Activated CD8-positive, alpha-beta T cell treated with anti-CD3 and anti-CD28 coated beads for 36 hours (primary cell): ENCODE measurements at regions of chr16 and their contacts with region 1.

Region 1: GRCh38 chr16:27109666-27110523 is 43.2 kb downstream of the C16orf82 start:
- DNase-seq: peak; percentile 78
- ATAC-seq: peak; percentile 98
- H3K4me3 Mint-ChIP-seq: peak overlapping the region; percentile 53
- H3K27ac Mint-ChIP-seq: no peak overlapping the region
- H3K4me1 Mint-ChIP-seq: peaks cover 2% of the 10 kb centered on the region
- H3K27me3 Mint-ChIP-seq: no peaks in the 10 kb centered on the region
- CTCF ChIP-seq: peak; percentile 99

Region 2: DNA sequence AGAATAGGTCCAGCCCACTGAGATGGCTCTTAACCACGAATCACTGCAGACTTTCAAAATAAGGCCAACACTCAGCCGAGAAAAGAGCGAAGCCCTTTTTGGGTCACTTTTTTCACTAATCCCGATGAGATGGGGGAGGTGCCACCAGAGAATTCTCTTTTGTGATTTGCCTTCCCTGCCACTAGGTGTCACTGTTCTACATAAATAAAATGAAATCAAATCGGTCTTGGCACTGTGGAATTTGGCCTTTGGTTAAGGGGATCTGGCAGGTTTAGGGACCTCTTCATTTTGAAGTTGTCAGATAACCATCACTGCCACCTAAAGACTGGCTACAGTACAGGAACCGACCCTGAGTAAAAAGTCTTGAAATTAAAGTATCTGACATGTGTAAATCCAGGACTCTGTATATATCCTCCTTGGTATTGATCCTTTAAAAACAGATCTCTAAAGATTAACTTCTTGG is 1271.1 kb before region 1 on chr16:
- CTCF ChIA-PET with region 1: interaction called, 5 read pairs
- POLR2A ChIA-PET with region 1: no interaction called
- intact Hi-C with region 1: loop called (anchors 5 kb)
- DNase-seq: peak; percentile 26
- ATAC-seq: peak; percentile 34
- H3K4me3 Mint-ChIP-seq: no peak overlapping the region
- H3K27ac Mint-ChIP-seq: no peak overlapping the region
- H3K4me1 Mint-ChIP-seq: peaks cover 2% of the 10 kb centered on the region
- H3K27me3 Mint-ChIP-seq: peaks cover 15% of the 10 kb centered on the region
- CTCF ChIP-seq: peak; percentile 81

Region 3: DNA sequence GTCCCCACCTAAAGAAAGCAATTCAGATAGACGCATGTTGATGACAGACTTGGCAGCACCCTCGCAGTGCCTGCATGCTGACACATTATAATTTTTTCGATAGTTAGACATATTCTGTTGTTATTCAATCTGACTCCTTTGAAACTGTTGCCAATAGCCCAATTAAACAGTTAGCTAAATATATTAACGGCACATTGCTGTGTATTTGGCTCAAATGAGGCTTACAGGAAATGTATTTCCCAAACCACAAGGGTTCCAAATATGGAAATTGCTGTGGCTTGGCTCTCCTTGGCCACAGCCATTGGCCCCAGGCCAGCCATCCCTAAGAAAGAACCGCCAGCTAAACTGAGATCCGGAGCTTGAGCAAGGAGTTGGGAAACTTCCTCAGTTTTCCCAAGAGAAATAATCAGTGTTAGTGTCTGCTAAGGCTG is 12.1 kb before region 1 on chr16:
- CTCF ChIA-PET with region 1: interaction called, 14 read pairs
- POLR2A ChIA-PET with region 1: interaction called, 4 read pairs
- intact Hi-C with region 1: no loop called
- DNase-seq: no peak
- ATAC-seq: no peak
- H3K4me3 Mint-ChIP-seq: no peak overlapping the region
- H3K27ac Mint-ChIP-seq: no peak overlapping the region
- H3K4me1 Mint-ChIP-seq: no peaks in the 10 kb centered on the region
- H3K27me3 Mint-ChIP-seq: peaks cover 3% of the 10 kb centered on the region
- CTCF ChIP-seq: no peak

Region 4: DNA sequence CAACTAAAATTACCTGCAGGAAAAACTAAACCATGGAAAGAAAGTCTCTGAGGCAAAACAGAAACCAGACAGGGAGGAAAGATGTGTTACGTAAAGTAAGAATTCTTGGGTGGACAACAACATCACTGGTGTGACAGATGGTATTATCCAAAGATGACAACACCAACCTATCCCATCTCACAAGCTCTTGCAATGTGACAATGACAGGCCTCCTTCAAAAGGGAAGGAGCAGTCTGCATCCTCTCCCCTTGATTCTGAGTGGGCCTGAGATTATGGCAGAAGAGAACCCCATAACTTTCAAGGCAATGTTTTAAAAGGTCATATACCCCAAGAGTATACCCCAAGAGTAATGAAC is 75.9 kb after region 1 on chr16:
- CTCF ChIA-PET with region 1: no interaction called
- POLR2A ChIA-PET with region 1: no interaction called
- intact Hi-C with region 1: no loop called
- DNase-seq: no peak
- ATAC-seq: no peak
- H3K4me3 Mint-ChIP-seq: no peak overlapping the region
- H3K27ac Mint-ChIP-seq: no peak overlapping the region
- H3K4me1 Mint-ChIP-seq: peaks cover 2% of the 10 kb centered on the region
- H3K27me3 Mint-ChIP-seq: no peaks in the 10 kb centered on the region
- CTCF ChIP-seq: no peak